ENCODE measurements at regions of chr10 and their contacts with region 1.

Region 1: GRCh38 chr10:71285180-71285545 is 33.9 kb upstream of the SLC29A3 start:
- DNase-seq: peak; percentile 55
- H3K4me3 Mint-ChIP-seq: no peak overlapping the region
- H3K27ac Mint-ChIP-seq: no peak overlapping the region
- H3K4me1 Mint-ChIP-seq: no peaks in the 10 kb centered on the region
- H3K27me3 Mint-ChIP-seq: no peaks in the 10 kb centered on the region
- CTCF ChIP-seq: peak; percentile 71

Region 2: DNA sequence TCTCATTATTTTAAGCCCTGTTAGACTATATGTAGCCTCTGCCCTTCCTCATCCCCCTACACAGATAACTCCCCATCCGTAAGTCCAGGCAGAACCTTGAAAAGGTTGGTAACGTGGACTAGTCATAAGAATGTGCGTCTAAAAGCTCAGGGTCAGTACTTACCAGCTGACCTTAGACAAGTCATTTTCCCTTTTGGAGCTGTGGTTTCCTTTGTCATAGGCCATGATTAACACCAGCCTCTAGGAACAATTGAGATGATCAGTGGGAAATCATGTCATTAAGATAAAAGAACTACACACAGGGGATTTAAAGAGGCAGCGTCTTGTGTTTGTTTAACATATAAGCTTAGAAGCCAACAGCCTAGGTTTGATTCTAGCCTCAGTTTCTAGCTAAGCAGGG is 79.7 kb before region 1 on chr10:
- CTCF ChIA-PET with region 1: interaction called, 15 read pairs
- POLR2A ChIA-PET with region 1: no interaction called
- intact Hi-C with region 1: loop called (anchors 1 kb)
- DNase-seq: no peak
- H3K4me3 Mint-ChIP-seq: no peak overlapping the region
- H3K27ac Mint-ChIP-seq: no peak overlapping the region
- H3K4me1 Mint-ChIP-seq: peaks cover 4% of the 10 kb centered on the region
- H3K27me3 Mint-ChIP-seq: peaks cover 11% of the 10 kb centered on the region
- CTCF ChIP-seq: no peak

Region 3: GRCh38 chr10:71255808-71256660 is 29.1 kb before region 1 on chr10:
- CTCF ChIA-PET with region 1: interaction called, 10 read pairs
- POLR2A ChIA-PET with region 1: no interaction called
- intact Hi-C with region 1: no loop called
- DNase-seq: peak; percentile 89
- H3K4me3 Mint-ChIP-seq: peak overlapping the region; percentile 62
- H3K27ac Mint-ChIP-seq: peak overlapping the region; percentile 28
- H3K4me1 Mint-ChIP-seq: peaks cover 56% of the 10 kb centered on the region
- H3K27me3 Mint-ChIP-seq: no peaks in the 10 kb centered on the region
- CTCF ChIP-seq: no peak

Region 4: DNA sequence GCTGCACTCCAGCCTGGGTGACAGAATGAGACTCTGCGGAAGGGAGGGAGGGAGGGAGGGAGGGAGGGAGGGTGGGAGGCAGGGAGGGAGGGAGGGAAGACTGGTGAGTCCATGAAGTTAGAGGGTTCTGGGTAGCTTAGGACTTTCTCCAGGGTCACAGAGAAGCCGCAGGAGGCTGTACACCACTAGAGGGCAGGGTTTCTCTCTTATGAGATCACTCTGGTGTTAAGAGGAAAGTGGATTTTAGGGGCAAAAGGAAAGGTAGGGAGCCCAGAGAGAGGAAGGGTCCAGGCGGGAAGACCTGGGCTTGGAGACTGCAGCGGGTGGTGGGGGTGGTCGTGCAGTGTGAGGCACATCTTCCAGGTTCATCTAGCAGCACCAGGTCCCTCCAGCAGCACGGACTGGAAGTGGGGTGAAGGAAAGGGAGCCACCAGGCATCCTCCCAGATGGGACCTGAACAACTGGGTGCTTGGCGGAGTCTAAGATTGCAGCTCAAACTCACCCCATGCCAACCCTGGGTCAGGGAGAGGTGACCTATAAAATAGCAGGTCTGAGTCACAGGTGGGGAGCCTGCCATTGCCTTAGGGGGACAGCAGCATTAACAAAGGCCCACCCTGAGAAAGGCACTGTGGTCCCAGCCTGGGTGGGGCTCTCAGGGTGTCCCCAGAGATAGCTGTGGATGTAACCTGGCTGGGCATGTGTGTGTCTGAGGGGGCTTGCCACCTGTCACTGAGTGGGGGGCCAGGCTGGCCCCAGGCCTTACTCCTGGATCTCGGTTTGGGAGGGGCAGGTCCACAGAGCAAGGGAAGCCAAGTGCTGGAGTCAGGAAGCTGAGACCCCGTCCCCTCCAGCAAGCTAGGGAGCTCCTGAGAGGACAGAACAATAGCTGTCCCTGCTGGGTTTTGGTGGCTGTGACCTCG is 14.6 kb before region 1 on chr10:
- CTCF ChIA-PET with region 1: interaction called, 43 read pairs
- POLR2A ChIA-PET with region 1: no interaction called
- intact Hi-C with region 1: no loop called
- DNase-seq: peak; percentile 72
- H3K4me3 Mint-ChIP-seq: no peak overlapping the region
- H3K27ac Mint-ChIP-seq: peak overlapping the region; percentile 90
- H3K4me1 Mint-ChIP-seq: peaks cover 44% of the 10 kb centered on the region
- H3K27me3 Mint-ChIP-seq: no peaks in the 10 kb centered on the region
- CTCF ChIP-seq: peak; percentile 46

Region 5: DNA sequence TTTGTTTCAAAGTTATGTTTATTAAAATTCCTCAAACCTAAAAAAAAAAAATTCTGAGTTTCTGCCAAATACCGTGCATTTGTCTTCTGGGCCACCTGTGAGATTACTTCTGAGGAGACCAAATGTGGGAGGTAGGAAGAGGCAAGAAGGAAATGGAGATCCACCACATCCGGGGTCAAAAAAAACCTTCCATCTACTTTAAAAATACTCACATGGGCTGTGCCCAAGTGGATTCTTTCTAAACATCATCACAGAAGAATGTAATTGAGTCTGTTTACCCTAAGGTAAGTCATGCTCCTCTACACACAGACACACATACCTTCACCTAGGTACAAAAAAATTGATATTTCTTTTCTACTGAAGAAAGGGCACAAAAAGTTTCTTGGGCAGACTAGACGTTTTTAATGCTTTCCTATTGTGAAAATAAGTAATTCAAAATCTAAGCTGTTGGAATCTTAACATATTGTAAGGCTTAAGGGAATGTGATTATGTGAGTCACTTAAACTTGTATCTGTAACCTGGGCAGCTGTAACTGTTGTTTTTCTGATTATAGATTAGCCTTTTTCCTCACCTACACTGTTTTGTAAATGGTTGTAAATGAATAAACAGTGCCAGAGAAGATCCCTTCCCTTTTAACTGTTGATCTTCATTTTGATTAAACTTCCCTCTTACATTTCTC is 822.3 kb after region 1 on chr10:
- CTCF ChIA-PET with region 1: no interaction called
- POLR2A ChIA-PET with region 1: no interaction called
- intact Hi-C with region 1: no loop called
- DNase-seq: peak; percentile 5
- H3K4me3 Mint-ChIP-seq: no peak overlapping the region
- H3K27ac Mint-ChIP-seq: no peak overlapping the region
- H3K4me1 Mint-ChIP-seq: peaks cover 18% of the 10 kb centered on the region
- H3K27me3 Mint-ChIP-seq: no peaks in the 10 kb centered on the region
- CTCF ChIP-seq: no peak

Measured in MCF 10A (cell line).